Gastrocnemius medialis (tissue), 4 donors: ENCODE measurements at regions of chr7 and their contacts with region 1.

Region 1: GRCh38 chr7:111486472-111487142 is 75.7 kb downstream of the IMMP2L start:
- DNase-seq: no peak
- ATAC-seq: no peak
- H3K4me3 ChIP-seq: no peak overlapping the region
- H3K27ac ChIP-seq: no peak overlapping the region
- H3K4me1 ChIP-seq: no peaks in the 10 kb centered on the region
- H3K27me3 ChIP-seq: no peaks in the 10 kb centered on the region
- CTCF ChIP-seq: peak; percentile 34 to 70 (median 64)
- POLR2A ChIP-seq: no peak

Region 2: GRCh38 chr7:111098011-111098925 is 388.3 kb before region 1 on chr7:
- in situ Hi-C with region 1: loop called in 3 of 4 experiments (anchors 5 to 10 kb)
- intact Hi-C with region 1: no loop called
- DNase-seq: no peak
- ATAC-seq: peak in 1 of 2 donors; percentile 89
- H3K4me3 ChIP-seq: no peak overlapping the region
- H3K27ac ChIP-seq: no peak overlapping the region
- H3K4me1 ChIP-seq: peaks cover 10 to 14% of the 10 kb centered on the region in 2 donors
- H3K27me3 ChIP-seq: no peaks in the 10 kb centered on the region
- CTCF ChIP-seq: peak in 3 of 5 experiments; percentile 16 to 51 (median 30)
- POLR2A ChIP-seq: no peak

Region 3: DNA sequence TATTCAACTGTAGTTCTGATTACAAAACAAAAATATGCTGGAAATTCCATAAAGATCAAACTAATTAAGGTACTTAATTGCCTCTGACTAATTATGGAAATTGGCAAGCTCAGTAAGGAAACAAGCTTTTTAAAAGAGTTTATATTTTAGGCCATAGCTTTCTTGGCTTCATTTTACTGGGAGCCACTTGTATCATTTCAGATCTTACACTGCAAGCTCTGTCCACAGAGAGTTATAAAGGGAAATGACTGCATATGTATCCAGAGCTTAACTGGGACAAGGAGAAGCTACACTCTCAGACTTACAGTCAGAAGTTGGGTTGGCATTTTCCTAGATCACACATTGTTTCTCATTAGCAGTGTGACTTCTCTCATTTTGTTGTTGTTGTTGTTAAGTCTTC is 303.3 kb before region 1 on chr7:
- in situ Hi-C with region 1: no loop called
- intact Hi-C with region 1: no loop called
- DNase-seq: no peak
- ATAC-seq: peak; percentile 95 to 99
- H3K4me3 ChIP-seq: no peak overlapping the region
- H3K27ac ChIP-seq: peak overlapping the region; percentile 24 to 65 (median 44)
- H3K4me1 ChIP-seq: peaks cover 19 to 21% of the 10 kb centered on the region in 2 donors
- H3K27me3 ChIP-seq: no peaks in the 10 kb centered on the region
- CTCF ChIP-seq: no peak
- POLR2A ChIP-seq: no peak

Region 4: DNA sequence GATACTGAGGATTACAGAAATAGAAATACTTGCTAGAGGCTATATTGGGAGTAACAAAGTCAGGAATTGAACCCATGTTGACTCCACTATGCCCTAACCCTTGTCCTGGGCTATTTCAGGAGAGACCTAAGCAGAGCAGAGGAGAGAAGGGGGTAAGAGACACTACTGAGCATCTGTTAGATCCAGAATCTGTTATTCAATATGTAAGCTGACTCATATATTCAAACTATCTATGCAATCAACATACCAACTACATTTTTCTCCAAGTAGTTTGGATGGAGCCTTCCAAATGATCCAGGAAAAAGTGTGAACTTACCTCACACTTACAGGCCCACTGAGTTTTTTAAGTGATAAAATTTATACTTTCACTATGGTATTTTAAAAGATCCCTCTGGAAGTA is 140.4 kb before region 1 on chr7:
- in situ Hi-C with region 1: no loop called
- intact Hi-C with region 1: loop called (anchors 10 kb)
- DNase-seq: no peak
- ATAC-seq: no peak
- H3K4me3 ChIP-seq: no peak overlapping the region
- H3K27ac ChIP-seq: no peak overlapping the region
- H3K4me1 ChIP-seq: no peaks in the 10 kb centered on the region
- H3K27me3 ChIP-seq: no peaks in the 10 kb centered on the region
- CTCF ChIP-seq: no peak
- POLR2A ChIP-seq: no peak